ENCODE measurements at regions of chr11 and their contacts with region 1.

Region 1: GRCh38 chr11:118353084-118353710 is 6.2 kb upstream of the UBE4A start:
- DNase-seq: peak in 2 of 4 experiments; percentile 16 to 37
- ATAC-seq: no peak
- H3K4me3 ChIP-seq: no peak overlapping the region
- H3K27ac ChIP-seq: no peak overlapping the region
- H3K4me1 ChIP-seq: peaks cover 0 to 6% of the 10 kb centered on the region in 2 experiments; a peak in 1 of 5 replicates
- H3K27me3 ChIP-seq: peaks cover 0 to 4% of the 10 kb centered on the region in 2 experiments; a peak in 1 of 5 replicates
- CTCF ChIP-seq: peak; percentile 40 to 75 (median 46); a peak in 4 of 6 replicates
- EP300 ChIP-seq: no peak
- POLR2A ChIP-seq: no peak
- RAD21 ChIP-seq: peak; percentile 75 to 76

Region 2: DNA sequence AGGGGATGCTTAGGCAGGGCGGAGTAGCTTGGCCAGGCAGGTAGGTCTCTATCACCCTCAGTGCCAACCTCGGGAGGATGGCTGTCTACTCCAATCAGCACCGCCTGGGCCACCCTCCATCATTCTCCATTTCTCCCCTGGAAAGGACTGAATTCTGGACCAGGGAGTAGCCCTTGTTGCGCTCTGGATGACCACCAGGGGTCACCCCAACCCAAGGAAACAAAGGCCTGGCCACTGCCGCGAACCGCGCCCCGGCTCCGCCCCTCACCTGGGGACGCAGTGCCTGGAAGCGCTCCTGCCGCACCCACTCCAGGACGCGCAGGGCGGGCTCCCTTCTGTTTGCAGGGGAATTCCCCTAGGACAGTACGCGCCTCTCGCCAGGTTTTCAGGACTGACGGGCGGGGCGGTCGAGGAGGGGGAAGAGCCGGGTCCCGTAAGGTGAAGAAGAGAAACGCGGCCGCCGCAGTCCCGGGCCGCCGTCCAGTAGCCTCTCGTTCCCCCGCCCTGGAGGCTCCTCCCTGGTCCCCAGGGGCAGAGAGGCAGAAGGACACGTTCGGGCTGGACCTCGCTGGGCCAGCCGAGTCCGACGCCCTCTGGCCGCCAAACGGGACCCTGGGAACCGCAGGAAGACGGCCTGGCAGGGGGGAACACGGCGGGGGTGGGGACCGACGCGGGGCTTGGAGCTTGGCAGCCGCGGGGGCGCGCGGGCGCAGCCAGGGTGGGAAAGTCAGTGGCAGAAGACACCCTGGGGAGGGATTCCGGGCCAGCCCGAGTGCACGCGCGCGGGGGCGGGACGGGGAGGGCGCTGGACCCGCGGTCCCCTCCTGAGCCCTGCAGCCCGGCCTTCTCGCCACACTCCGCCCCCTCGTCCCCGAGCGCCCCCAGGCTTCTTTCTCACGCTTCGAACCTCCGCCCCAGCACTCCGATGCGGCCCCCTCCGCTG is 207.6 kb before region 1 on chr11:
- CTCF ChIA-PET with region 1: no interaction called
- POLR2A ChIA-PET with region 1: no interaction called
- in situ Hi-C with region 1: no loop called
- intact Hi-C with region 1: loop called (anchors 2 kb)
- DNase-seq: peak; percentile 87 to 96 (median 94)
- ATAC-seq: peak; percentile 97
- H3K4me3 ChIP-seq: peak overlapping the region; percentile 46
- H3K27ac ChIP-seq: no peak overlapping the region
- H3K4me1 ChIP-seq: peaks cover 0 to 11% of the 10 kb centered on the region in 2 experiments; a peak in 3 of 5 replicates
- H3K27me3 ChIP-seq: peaks cover 7 to 62% of the 10 kb centered on the region in 2 experiments; a peak in 4 of 5 replicates
- CTCF ChIP-seq: peak; percentile 86 to 93 (median 92)
- EP300 ChIP-seq: no peak
- POLR2A ChIP-seq: no peak
- RAD21 ChIP-seq: peak; percentile 94 to 96

Region 3: DNA sequence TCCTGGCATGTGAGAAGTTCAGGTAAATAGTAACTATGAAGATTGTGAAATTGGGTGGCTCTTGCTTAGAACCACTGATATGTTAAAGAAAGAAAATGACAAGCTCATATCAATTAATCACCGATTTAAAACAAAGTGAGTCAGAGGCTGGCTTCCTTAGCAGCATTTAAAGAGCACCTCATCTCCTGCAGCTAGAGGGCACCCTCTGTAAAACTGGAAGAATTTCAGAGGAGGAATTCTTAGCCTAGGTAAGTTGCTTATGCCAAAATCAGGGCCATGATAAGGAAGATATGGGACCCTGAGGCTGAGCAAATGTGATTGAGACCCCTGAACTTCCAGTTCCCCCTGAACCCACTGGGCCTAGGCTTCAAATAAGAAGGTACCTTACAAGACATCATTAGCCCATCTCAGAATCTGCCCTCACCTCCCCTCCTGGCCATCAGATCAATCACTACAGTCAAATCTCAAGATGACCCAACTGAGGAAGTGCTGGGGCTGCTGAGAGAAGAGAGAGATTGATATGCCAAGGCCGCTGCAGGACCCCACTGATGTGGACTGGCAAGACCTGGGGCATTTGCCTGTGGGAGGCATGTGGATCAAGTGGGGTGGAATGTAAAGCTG is 57.3 kb before region 1 on chr11:
- CTCF ChIA-PET with region 1: interaction called, 17 read pairs
- POLR2A ChIA-PET with region 1: no interaction called
- in situ Hi-C with region 1: no loop called
- intact Hi-C with region 1: loop called (anchors 1 kb)
- DNase-seq: peak in 2 of 4 experiments; percentile 32 to 50
- ATAC-seq: peak; percentile 77
- H3K4me3 ChIP-seq: no peak overlapping the region
- H3K27ac ChIP-seq: no peak overlapping the region
- H3K4me1 ChIP-seq: no peaks in the 10 kb centered on the region; a peak in 1 of 5 replicates
- H3K27me3 ChIP-seq: peaks cover 4 to 10% of the 10 kb centered on the region in 2 experiments; a peak in 2 of 5 replicates
- CTCF ChIP-seq: peak; percentile 57 to 81 (median 61); a peak in 5 of 6 replicates
- EP300 ChIP-seq: no peak
- POLR2A ChIP-seq: no peak
- RAD21 ChIP-seq: peak; percentile 70 to 85

Region 4: DNA sequence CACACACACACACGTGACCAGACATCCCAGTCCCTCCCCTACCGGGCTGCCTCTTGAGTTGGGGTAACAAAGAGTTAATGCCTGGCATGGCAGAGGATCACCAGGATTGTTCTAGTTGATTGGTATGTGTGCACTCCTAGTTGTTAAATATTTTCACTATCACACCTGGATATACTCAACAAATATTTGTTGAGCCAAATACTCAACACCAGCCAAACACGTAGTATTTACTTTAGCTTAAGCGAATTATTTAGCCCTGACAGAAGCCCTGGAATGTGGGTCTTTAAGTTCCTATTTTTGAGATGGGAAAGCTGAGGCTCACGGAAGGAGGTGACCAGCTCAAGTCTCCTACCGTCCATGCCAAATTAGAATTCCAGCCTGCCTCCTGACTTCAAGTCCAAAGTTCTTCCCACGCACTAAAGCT is 38.2 kb before region 1 on chr11:
- CTCF ChIA-PET with region 1: no interaction called
- POLR2A ChIA-PET with region 1: no interaction called
- in situ Hi-C with region 1: no loop called
- intact Hi-C with region 1: loop called (anchors 5 kb)
- DNase-seq: no peak
- ATAC-seq: no peak
- H3K4me3 ChIP-seq: no peak overlapping the region
- H3K27ac ChIP-seq: no peak overlapping the region
- H3K4me1 ChIP-seq: peaks cover 25 to 55% of the 10 kb centered on the region in 2 experiments
- H3K27me3 ChIP-seq: peaks cover 0 to 7% of the 10 kb centered on the region in 2 experiments; a peak in 1 of 5 replicates
- CTCF ChIP-seq: no peak
- EP300 ChIP-seq: no peak
- POLR2A ChIP-seq: no peak
- RAD21 ChIP-seq: no peak